ENCODE measurements at regions of chr14 and their contacts with region 1.

Region 1: DNA sequence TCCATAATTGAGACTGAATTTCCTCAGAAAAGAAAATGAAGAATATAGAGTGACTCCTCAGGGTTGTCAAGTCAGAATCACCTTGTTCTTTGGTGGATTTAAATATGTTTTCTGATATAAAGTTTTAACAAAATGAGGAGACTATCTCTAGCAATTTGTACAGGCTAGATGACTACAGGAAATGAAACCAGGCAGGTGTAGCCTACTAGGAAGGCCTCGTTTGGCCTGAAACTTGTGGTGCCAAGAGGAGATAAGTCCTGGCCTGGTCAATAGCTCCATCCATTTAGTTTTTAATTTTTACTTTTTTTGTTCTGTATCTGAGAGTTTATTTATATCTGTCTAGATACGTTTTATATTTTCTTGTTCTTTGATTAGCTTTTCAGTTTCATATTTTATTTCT is 41.5 kb downstream of the SNAPC1 start:
- DNase-seq: no peak
- ATAC-seq: no peak
- H3K4me3 ChIP-seq: no peak overlapping the region
- H3K27ac ChIP-seq: no peak overlapping the region
- H3K4me1 ChIP-seq: no peaks in the 10 kb centered on the region
- H3K27me3 ChIP-seq: no peaks in the 10 kb centered on the region
- CTCF ChIP-seq: no peak

Region 2: DNA sequence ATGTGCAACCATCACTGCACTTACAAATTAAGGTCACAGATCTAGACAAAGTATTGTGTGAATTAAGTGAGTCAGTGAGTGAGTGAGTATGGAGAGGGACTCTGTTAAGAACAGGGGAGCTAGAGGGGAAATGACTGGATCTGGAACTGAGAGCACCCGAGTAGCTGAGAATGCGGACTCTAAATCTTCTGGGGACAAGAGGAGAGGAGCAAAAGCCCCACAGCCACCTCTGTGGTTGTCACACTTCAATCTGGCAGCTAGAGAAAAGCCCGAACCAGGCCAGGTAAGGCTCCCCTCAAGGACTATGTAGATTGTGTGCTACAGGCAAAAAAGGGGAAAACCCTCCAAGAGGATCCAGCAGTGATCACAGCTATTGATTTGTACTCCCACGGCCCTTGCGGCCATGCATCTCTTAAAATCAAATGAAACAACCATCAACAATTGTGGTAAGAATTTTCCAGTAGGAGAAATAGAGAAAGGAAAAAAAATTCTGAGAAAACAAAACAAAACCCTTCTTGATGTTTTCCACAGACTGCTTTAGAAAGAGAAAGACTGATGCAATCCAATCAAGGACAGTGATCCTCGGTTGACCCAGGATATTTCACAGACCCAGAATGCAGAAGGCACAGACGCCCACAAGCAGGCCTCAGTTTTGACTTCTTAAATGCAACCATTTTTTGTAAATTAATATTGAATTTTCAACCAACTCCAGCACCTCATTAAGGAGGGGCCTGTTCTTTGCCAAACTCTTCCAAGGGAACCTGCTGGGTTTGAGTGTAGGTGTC is 713.1 kb before region 1 on chr14:
- CTCF ChIA-PET with region 1: no interaction called
- POLR2A ChIA-PET with region 1: no interaction called
- in situ Hi-C with region 1: no loop called
- intact Hi-C with region 1: no loop called
- DNase-seq: no peak
- ATAC-seq: no peak
- H3K4me3 ChIP-seq: no peak overlapping the region
- H3K27ac ChIP-seq: no peak overlapping the region
- H3K4me1 ChIP-seq: no peaks in the 10 kb centered on the region
- H3K27me3 ChIP-seq: no peaks in the 10 kb centered on the region
- CTCF ChIP-seq: no peak

Region 3: GRCh38 chr14:61562345-61563165 is 241.2 kb before region 1 on chr14:
- CTCF ChIA-PET with region 1: no interaction called
- POLR2A ChIA-PET with region 1: interaction called, 10 read pairs
- in situ Hi-C with region 1: no loop called
- intact Hi-C with region 1: no loop called
- DNase-seq: no peak
- ATAC-seq: peak; percentile 54
- H3K4me3 ChIP-seq: no peak overlapping the region
- H3K27ac ChIP-seq: peak overlapping the region; percentile 53
- H3K4me1 ChIP-seq: peaks cover 20% of the 10 kb centered on the region
- H3K27me3 ChIP-seq: no peaks in the 10 kb centered on the region
- CTCF ChIP-seq: no peak

Region 4: GRCh38 chr14:63282997-63283883 is 1479.5 kb after region 1 on chr14:
- CTCF ChIA-PET with region 1: interaction called, 11 read pairs
- POLR2A ChIA-PET with region 1: no interaction called
- in situ Hi-C with region 1: no loop called
- intact Hi-C with region 1: no loop called
- DNase-seq: no peak
- ATAC-seq: no peak
- H3K4me3 ChIP-seq: no peak overlapping the region
- H3K27ac ChIP-seq: no peak overlapping the region
- H3K4me1 ChIP-seq: no peaks in the 10 kb centered on the region
- H3K27me3 ChIP-seq: no peaks in the 10 kb centered on the region; the same call in 1 of the 2 replicates
- CTCF ChIP-seq: no peak

Measured in Panc1 (cell line).